Dorsolateral prefrontal cortex (tissue), 120 donors: ENCODE measurements at regions of chr17 and their contacts with region 1.

Region 1: DNA sequence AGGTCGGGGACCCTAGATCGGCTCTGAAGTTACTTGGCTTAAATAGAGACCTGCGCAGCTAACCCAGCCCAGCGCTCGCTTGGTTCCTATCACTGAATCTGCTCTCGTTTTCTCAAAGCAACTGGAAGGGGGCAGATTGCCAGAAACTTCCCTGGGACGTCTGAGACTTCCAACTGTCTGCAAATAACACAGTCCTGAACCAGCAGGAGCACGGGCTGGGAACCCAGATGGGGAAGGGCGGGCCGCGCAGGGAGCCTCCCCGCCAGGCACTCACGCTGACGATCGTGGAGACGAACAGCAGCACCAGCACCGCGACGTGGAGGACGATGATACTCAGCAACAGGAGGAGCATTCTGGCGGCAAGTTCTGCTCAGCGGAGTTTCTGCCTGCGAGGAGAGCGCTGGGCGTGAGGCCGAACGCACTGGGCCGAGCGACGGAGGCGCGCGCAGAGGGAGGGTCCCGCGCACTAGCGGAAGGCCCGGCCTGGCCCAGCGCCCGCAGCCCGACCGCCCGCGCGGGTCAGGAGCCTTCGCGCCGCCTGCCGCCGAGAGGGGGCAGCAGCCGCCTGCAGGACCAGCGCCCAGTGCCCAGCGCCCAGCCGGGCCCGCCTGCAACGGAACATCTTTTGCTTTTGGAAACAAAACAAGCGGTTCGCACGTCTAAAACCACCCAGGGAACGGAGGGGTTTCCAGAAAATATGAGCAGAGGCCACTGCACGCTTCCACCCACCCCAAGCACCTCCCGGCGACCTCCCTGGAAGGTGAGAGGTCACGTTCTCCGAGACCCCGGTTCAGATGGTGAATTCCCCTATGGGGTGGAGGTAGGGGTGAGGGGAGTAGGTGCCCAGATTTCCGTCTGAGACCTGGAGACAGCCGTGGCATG is 4.5 kb downstream of the PMP22 start:
- DNase-seq: peak; percentile 66 to 90 (median 79)
- H3K4me3 ChIP-seq: peak overlapping the region; percentile 49 to 86 (median 75)
- H3K27ac ChIP-seq: peak overlapping the region; percentile 87 to 99 (median 96)
- H3K27me3 ChIP-seq: peaks cover 0 to 7% (median 0%) of the 10 kb centered on the region in 45 donors
- CTCF ChIP-seq: peak; percentile 35 to 97 (median 78)

Region 2: GRCh38 chr17:15233022-15233805 is 27.4 kb before region 1 on chr17:
- intact Hi-C with region 1: loop called in 1 of 2 experiments (anchors 2 kb)
- DNase-seq: peak in 1 of 10 donors; percentile 46
- H3K4me3 ChIP-seq: no peak overlapping the region
- H3K27ac ChIP-seq: peak overlapping the region; percentile 20 to 96 (median 90)
- H3K27me3 ChIP-seq: no peaks in the 10 kb centered on the region
- CTCF ChIP-seq: peak in 53 of 56 donors; percentile 11 to 72 (median 46)

Region 3: GRCh38 chr17:15321556-15322251 is 61.1 kb after region 1 on chr17:
- intact Hi-C with region 1: no loop called
- DNase-seq: no peak
- H3K4me3 ChIP-seq: no peak overlapping the region
- H3K27ac ChIP-seq: no peak overlapping the region
- H3K27me3 ChIP-seq: no peaks in the 10 kb centered on the region
- CTCF ChIP-seq: no peak

Region 4: DNA sequence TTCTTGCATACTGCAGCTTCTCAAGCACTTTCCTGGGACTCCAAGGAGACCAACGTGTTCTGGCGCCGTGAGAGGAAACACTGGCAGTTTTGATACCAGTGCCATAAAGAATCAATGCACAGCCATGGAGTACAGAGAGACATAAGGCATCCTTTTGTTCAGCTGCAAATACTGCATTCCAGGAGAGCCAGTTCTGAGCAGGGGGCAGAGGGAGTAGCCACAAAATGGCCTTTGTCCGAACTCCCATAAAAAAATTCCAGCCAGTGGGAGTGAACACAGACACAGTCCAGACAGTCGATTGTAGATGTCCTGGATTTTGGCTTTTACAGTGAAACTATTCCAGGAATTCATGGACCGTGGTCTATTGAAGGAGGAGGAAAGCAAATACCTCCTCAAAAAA is 117.0 kb after region 1 on chr17:
- intact Hi-C with region 1: loop called (anchors 2 to 5 kb)
- DNase-seq: peak in 4 of 10 donors; percentile 47 to 65 (median 56)
- H3K4me3 ChIP-seq: peak overlapping the region in 35 of 59 donors; percentile 3 to 55 (median 29)
- H3K27ac ChIP-seq: peak overlapping the region; percentile 14 to 93 (median 83)
- H3K27me3 ChIP-seq: no peaks in the 10 kb centered on the region
- CTCF ChIP-seq: peak in 4 of 56 donors; percentile 1 to 12 (median 6)

Region 5: GRCh38 chr17:15456972-15457722 is 196.5 kb after region 1 on chr17:
- intact Hi-C with region 1: loop called (anchors 1 to 5 kb)
- DNase-seq: peak; percentile 54 to 85 (median 76)
- H3K4me3 ChIP-seq: peak overlapping the region in 20 of 59 donors; percentile 0 to 40 (median 15)
- H3K27ac ChIP-seq: peak overlapping the region; percentile 58 to 94 (median 89)
- H3K27me3 ChIP-seq: no peaks in the 10 kb centered on the region
- CTCF ChIP-seq: peak in 51 of 56 donors; percentile 17 to 72 (median 46)

Region 6: GRCh38 chr17:15502369-15503112 is 241.9 kb after region 1 on chr17:
- intact Hi-C with region 1: loop called (anchors 1 to 2 kb)
- DNase-seq: peak; percentile 74 to 89 (median 84)
- H3K4me3 ChIP-seq: peak overlapping the region in 55 of 59 donors; percentile 4 to 61 (median 39)
- H3K27ac ChIP-seq: peak overlapping the region in 56 of 59 donors; percentile 2 to 89 (median 77)
- H3K27me3 ChIP-seq: no peaks in the 10 kb centered on the region
- CTCF ChIP-seq: peak; percentile 48 to 94 (median 86)